CD4-positive, alpha-beta T cell (primary cell): ENCODE measurements at regions of chr12 and their contacts with region 1.

Region 1: DNA sequence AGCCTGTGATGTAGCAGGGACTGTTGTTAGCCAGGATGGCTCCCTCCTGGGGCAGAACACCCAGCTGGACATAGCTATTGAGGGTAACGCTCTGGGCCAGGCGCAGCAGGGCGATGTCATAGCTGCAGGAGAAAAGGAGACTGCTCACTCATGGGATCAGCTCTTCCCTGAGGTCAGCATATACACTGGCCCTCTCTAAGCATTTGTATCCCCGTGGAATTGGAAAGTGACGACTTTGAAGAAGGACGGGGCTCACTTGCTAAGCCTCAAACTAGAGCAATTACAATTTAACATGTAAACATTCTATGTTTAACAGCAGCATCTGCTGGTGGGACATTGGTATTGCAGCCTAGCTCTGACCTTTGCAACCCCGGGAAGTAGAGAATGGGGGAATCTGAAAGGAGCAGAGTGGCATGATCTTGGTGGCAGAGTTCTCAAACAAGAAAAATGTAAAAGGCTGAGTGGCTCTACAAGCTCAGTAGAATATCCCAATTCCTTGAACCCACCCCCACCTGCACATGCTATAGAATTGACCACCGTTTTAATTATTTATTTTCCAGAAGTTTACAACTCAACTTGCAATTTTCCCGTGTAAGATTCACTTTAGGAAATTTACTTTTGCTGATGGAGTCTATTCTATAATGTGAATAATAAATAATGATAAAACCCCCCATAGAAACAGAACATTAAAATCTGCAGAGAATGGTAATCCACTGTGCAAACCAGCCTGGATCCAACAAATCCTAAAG is 5.0 kb downstream of the CELA1 start:
- DNase-seq: peak; percentile 57 to 86 (median 65)
- ATAC-seq: peak; percentile 98
- H3K4me3 ChIP-seq: no peak overlapping the region
- H3K4me3 Mint-ChIP-seq: peak overlapping the region; percentile 42
- H3K27ac ChIP-seq: no peak overlapping the region
- H3K27ac Mint-ChIP-seq: peak overlapping the region; percentile 51
- H3K4me1 ChIP-seq: peaks cover 17% of the 10 kb centered on the region
- H3K4me1 Mint-ChIP-seq: peaks cover 11% of the 10 kb centered on the region
- H3K27me3 ChIP-seq: no peaks in the 10 kb centered on the region
- H3K27me3 Mint-ChIP-seq: no peaks in the 10 kb centered on the region
- CTCF ChIP-seq: peak; percentile 97

Region 2: DNA sequence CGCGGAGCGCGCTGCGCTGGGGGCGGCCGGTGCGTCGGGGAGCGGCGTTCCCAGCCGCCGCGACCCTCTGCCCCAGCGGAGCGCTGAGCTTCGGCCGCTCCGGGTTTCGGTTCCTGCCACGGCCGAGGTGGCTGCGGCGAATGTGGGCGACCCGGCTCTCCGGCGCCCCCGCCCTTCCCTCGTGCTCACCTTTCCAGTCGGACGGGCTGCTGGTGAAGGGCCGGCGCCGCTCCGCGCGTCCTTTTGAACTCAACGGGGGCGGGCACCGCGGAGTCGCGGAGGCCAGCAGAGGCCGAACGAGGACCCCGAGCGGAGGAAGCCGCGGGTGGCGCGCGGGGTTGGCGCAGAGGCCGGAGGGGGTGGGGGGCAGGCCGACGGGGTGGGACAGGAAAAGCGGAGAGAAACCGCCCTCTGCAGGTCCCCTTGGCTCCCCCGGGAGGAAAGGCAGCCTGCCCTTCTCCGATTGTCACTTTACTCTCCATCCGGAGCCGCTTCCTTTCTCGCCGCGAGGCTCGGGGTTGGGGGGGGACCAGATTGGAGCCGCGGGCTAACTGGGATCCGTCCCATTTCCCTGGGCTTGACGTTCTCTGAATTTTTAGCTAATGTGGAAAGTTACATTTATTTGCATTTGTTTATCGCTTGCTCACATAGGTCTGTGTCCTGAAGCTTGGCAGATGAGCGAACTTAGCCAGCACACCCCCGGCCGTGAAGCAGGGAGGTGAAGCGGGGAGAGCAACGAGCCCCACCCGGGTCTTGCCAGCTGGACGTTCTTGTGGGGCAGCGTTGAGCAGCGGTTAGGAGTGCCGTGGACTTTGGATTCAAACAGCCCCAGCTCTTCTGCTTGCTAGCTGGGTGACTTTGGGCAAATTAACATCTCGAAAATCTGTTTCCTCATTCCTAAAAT is 71.1 kb before region 1 on chr12 and contains the start of gene SMAGP:
- CTCF ChIA-PET with region 1: interaction called, 57 read pairs
- POLR2A ChIA-PET with region 1: interaction called, 48 read pairs
- intact Hi-C with region 1: loop called (anchors 1 kb)
- DNase-seq: peak in 13 of 14 experiments; percentile 14 to 70 (median 28)
- ATAC-seq: peak; percentile 44
- H3K4me3 ChIP-seq: peak within 1 kb of the TSS; percentile 72
- H3K4me3 Mint-ChIP-seq: peak within 1 kb of the TSS; percentile 95
- H3K27ac ChIP-seq: peak within 1 kb of the TSS in 1 of 2 donors; percentile 36
- H3K27ac Mint-ChIP-seq: peak within 1 kb of the TSS; percentile 71
- H3K4me1 ChIP-seq: peaks cover 21% of the 10 kb centered on the region
- H3K4me1 Mint-ChIP-seq: peaks cover 32% of the 10 kb centered on the region
- H3K27me3 ChIP-seq: no peaks in the 10 kb centered on the region
- H3K27me3 Mint-ChIP-seq: no peaks in the 10 kb centered on the region
- CTCF ChIP-seq: no peak
- total RNA-seq, gene SMAGP: 2.5 to 3.0 TPM

Region 3: GRCh38 chr12:51307655-51308593 is 33.5 kb before region 1 on chr12:
- CTCF ChIA-PET with region 1: interaction called, 31 read pairs
- POLR2A ChIA-PET with region 1: interaction called, 11 read pairs
- intact Hi-C with region 1: loop called (anchors 1 to 2 kb)
- DNase-seq: peak in 3 of 14 experiments; percentile 19 to 31 (median 26)
- ATAC-seq: peak; percentile 78
- H3K4me3 ChIP-seq: no peak overlapping the region
- H3K4me3 Mint-ChIP-seq: no peak overlapping the region
- H3K27ac ChIP-seq: peak overlapping the region; percentile 2 to 27
- H3K27ac Mint-ChIP-seq: peak overlapping the region; percentile 80
- H3K4me1 ChIP-seq: peaks cover 55% of the 10 kb centered on the region
- H3K4me1 Mint-ChIP-seq: peaks cover 73% of the 10 kb centered on the region
- H3K27me3 ChIP-seq: no peaks in the 10 kb centered on the region
- H3K27me3 Mint-ChIP-seq: no peaks in the 10 kb centered on the region
- CTCF ChIP-seq: peak; percentile 17

Region 4: DNA sequence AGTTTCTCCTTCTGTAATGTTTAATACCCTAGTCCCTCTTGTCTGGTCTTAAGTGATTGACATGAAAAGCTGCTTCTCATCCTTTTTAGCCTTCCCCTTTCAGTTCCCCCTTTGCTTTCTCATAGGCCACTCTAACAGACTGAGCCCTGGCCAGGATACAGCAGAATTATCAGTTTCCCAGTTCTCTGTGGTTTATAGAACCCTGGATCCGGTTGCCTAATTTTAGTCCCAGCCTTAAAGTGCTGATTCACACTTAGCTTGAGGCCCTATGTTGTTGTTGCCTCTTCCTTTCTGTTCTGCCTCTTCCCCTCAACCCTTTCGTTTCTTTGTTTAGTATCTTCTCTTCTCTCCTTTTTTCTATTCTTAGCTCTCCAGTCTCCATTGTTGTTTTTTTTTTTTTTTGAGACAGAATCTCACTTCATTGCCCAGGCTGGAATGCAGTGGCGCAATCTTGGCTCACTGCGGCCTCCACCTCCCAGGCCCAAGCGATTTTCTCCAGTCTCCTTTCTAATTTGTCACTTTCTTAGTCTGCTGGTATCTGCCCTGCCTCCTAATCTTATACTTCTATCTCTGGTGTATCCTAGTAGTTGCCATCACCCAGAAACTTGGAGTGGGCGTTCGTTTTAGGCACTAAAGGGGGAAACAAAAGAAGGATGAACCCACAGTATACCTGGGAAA is 14.5 kb before region 1 on chr12:
- CTCF ChIA-PET with region 1: interaction called, 52 read pairs
- POLR2A ChIA-PET with region 1: interaction called, 82 read pairs
- intact Hi-C with region 1: no loop called
- DNase-seq: peak in 4 of 14 experiments; percentile 12 to 67 (median 42)
- ATAC-seq: no peak
- H3K4me3 ChIP-seq: no peak overlapping the region
- H3K4me3 Mint-ChIP-seq: peak overlapping the region; percentile 62
- H3K27ac ChIP-seq: peak overlapping the region; percentile 25 to 48
- H3K27ac Mint-ChIP-seq: peak overlapping the region; percentile 87
- H3K4me1 ChIP-seq: peaks cover 73% of the 10 kb centered on the region
- H3K4me1 Mint-ChIP-seq: peaks cover 79% of the 10 kb centered on the region
- H3K27me3 ChIP-seq: no peaks in the 10 kb centered on the region
- H3K27me3 Mint-ChIP-seq: no peaks in the 10 kb centered on the region
- CTCF ChIP-seq: no peak

Region 5: DNA sequence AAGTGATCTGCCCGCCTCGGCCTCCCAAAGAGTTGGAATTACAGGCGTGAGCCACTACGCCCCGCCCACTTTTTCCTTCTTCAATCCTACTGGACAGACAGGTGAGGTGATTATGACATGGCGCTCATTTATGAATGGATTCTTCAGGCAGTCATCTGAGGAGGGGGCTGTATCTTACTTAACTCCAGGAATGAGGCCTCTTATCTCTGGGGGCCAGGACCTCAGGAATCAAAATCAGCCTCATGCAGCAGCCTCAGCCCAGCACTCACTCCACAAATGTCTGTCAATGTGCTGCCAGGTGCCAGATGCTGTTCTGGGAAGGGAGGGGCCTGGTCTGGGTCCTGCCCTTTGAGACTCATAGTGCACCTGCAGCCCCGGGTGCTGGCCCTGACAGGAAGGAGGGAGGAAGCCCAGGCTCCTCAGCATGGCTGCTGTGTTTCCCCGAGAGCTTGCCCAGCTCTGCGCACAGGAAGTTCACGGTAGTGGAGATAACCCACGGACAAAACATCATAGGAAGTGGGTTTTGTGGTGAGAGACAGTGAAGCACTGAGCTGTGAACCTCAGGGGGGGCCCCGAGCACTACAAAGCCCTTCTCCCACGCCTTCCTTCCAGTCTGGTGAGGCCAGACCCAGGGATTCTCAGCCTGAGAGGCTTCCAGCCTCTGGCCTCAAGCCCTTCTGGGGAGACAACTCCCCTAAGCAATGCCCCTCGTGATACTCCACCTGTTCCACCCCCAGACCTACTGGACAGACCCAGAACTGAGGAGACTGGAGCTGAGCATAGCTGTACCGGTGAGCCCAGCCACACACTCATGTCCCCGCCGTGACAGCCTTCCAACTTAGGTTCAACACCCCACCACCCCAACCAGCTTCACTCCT is 27.4 kb after region 1 on chr12:
- CTCF ChIA-PET with region 1: no interaction called
- POLR2A ChIA-PET with region 1: interaction called, 11 read pairs
- intact Hi-C with region 1: no loop called
- DNase-seq: peak; percentile 74 to 98 (median 84)
- ATAC-seq: peak; percentile 94
- H3K4me3 ChIP-seq: peak overlapping the region; percentile 42
- H3K4me3 Mint-ChIP-seq: peak overlapping the region; percentile 66
- H3K27ac ChIP-seq: peak overlapping the region in 1 of 2 donors; percentile 59
- H3K27ac Mint-ChIP-seq: peak overlapping the region; percentile 89
- H3K4me1 ChIP-seq: peaks cover 45% of the 10 kb centered on the region
- H3K4me1 Mint-ChIP-seq: peaks cover 67% of the 10 kb centered on the region
- H3K27me3 ChIP-seq: no peaks in the 10 kb centered on the region
- H3K27me3 Mint-ChIP-seq: no peaks in the 10 kb centered on the region
- CTCF ChIP-seq: no peak

Region 6: GRCh38 chr12:51379571-51379970 is 38.1 kb after region 1 on chr12:
- CTCF ChIA-PET with region 1: no interaction called
- POLR2A ChIA-PET with region 1: no interaction called
- intact Hi-C with region 1: no loop called
- DNase-seq: no peak
- ATAC-seq: no peak
- H3K4me3 ChIP-seq: no peak overlapping the region
- H3K4me3 Mint-ChIP-seq: no peak overlapping the region
- H3K27ac ChIP-seq: no peak overlapping the region
- H3K27ac Mint-ChIP-seq: no peak overlapping the region
- H3K4me1 ChIP-seq: peaks cover 33% of the 10 kb centered on the region
- H3K4me1 Mint-ChIP-seq: peaks cover 49% of the 10 kb centered on the region
- H3K27me3 ChIP-seq: no peaks in the 10 kb centered on the region
- H3K27me3 Mint-ChIP-seq: no peaks in the 10 kb centered on the region
- CTCF ChIP-seq: no peak